GM12878 (cell line): ENCODE measurements at regions of chr6 and their contacts with region 1.

Region 1: GRCh38 chr6:29649701-29650673 is 6.9 kb upstream of the MOG start:
- DNase-seq: peak; percentile 89
- ATAC-seq: peak; percentile 97
- H3K4me3 ChIP-seq: peak overlapping the region; percentile 74
- H3K27ac ChIP-seq: peak overlapping the region; percentile 75
- H3K4me1 ChIP-seq: no peaks in the 10 kb centered on the region
- H3K27me3 ChIP-seq: no peaks in the 10 kb centered on the region
- CTCF ChIP-seq: peak; percentile 90 to 98 (median 96)
- EP300 ChIP-seq: peak in 1 of 2 experiments; percentile 17; a peak in 1 of 4 replicates
- POLR2A ChIP-seq: peak; percentile 91
- RAD21 ChIP-seq: 0 out of 2 replicates have a peak, but pooled peaks have one; percentile 19

Region 2: GRCh38 chr6:29376003-29376402 is 274.0 kb before region 1 on chr6:
- CTCF ChIA-PET with region 1: interaction called, 14 read pairs
- POLR2A ChIA-PET with region 1: no interaction called
- RAD21 ChIA-PET with region 1: interaction called, 9 read pairs
- SMC1A ChIA-PET with region 1: interaction called, 4 read pairs
- in situ Hi-C with region 1: no loop called
- intact Hi-C with region 1: no loop called
- DNase-seq: no peak
- ATAC-seq: no peak
- H3K4me3 ChIP-seq: no peak overlapping the region
- H3K27ac ChIP-seq: no peak overlapping the region
- H3K4me1 ChIP-seq: no peaks in the 10 kb centered on the region
- H3K27me3 ChIP-seq: no peaks in the 10 kb centered on the region
- CTCF ChIP-seq: peak in 1 of 3 experiments; percentile 16; a peak in 1 of 6 replicates
- EP300 ChIP-seq: no peak
- POLR2A ChIP-seq: no peak
- RAD21 ChIP-seq: peak; percentile 59

Region 3: DNA sequence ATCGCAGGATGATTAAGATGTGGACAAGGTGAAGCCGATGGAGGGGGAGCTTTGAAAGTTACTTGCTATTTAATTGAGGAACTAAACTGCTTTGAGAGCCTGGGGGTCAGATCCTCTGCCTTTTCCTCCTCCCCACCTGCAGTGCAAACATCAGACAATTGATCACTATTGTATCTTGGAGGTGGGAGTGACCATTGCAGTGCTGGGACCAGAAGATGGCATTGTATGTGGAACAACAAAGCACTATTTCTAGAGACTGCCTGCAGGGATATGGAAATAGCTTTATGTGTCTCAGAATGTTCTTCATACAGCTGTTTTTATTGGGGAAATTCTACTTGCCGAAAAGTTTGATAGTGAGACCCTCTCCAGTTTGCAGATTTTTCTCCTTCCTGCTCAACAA is 11.1 kb after region 1 on chr6:
- CTCF ChIA-PET with region 1: interaction called, 113 read pairs
- POLR2A ChIA-PET with region 1: no interaction called
- RAD21 ChIA-PET with region 1: interaction called, 7 read pairs
- SMC1A ChIA-PET with region 1: interaction called, 9 read pairs
- in situ Hi-C with region 1: no loop called
- intact Hi-C with region 1: no loop called
- DNase-seq: no peak
- ATAC-seq: no peak
- H3K4me3 ChIP-seq: no peak overlapping the region
- H3K27ac ChIP-seq: no peak overlapping the region
- H3K4me1 ChIP-seq: peaks cover 11% of the 10 kb centered on the region
- H3K27me3 ChIP-seq: no peaks in the 10 kb centered on the region
- CTCF ChIP-seq: no peak
- EP300 ChIP-seq: no peak
- POLR2A ChIP-seq: no peak
- RAD21 ChIP-seq: no peak

Region 4: GRCh38 chr6:29696155-29697125 is 46.5 kb after region 1 on chr6:
- CTCF ChIA-PET with region 1: interaction called, 39 read pairs
- POLR2A ChIA-PET with region 1: interaction called, 4 read pairs
- RAD21 ChIA-PET with region 1: interaction called, 11 read pairs
- SMC1A ChIA-PET with region 1: interaction called, 8 read pairs
- in situ Hi-C with region 1: no loop called
- intact Hi-C with region 1: loop called (anchors 2 kb)
- DNase-seq: no peak
- ATAC-seq: peak; percentile 74
- H3K4me3 ChIP-seq: no peak overlapping the region
- H3K27ac ChIP-seq: no peak overlapping the region
- H3K4me1 ChIP-seq: no peaks in the 10 kb centered on the region
- H3K27me3 ChIP-seq: no peaks in the 10 kb centered on the region; a peak in 1 of 4 replicates
- CTCF ChIP-seq: peak; percentile 37 to 64 (median 61)
- EP300 ChIP-seq: no peak
- POLR2A ChIP-seq: no peak
- RAD21 ChIP-seq: peak; percentile 38; the same call in 1 of the 2 replicates

Region 5: GRCh38 chr6:29737707-29738630 is 88.0 kb after region 1 on chr6:
- CTCF ChIA-PET with region 1: interaction called, 18 read pairs
- POLR2A ChIA-PET with region 1: no interaction called
- RAD21 ChIA-PET with region 1: no interaction called
- SMC1A ChIA-PET with region 1: interaction called, 5 read pairs
- in situ Hi-C with region 1: no loop called
- intact Hi-C with region 1: no loop called
- DNase-seq: no peak
- ATAC-seq: peak; percentile 92
- H3K4me3 ChIP-seq: no peak overlapping the region
- H3K27ac ChIP-seq: no peak overlapping the region
- H3K4me1 ChIP-seq: no peaks in the 10 kb centered on the region
- H3K27me3 ChIP-seq: no peaks in the 10 kb centered on the region
- CTCF ChIP-seq: peak; percentile 84 to 88 (median 86)
- EP300 ChIP-seq: no peak
- POLR2A ChIP-seq: no peak
- RAD21 ChIP-seq: peak; percentile 87

Region 6: DNA sequence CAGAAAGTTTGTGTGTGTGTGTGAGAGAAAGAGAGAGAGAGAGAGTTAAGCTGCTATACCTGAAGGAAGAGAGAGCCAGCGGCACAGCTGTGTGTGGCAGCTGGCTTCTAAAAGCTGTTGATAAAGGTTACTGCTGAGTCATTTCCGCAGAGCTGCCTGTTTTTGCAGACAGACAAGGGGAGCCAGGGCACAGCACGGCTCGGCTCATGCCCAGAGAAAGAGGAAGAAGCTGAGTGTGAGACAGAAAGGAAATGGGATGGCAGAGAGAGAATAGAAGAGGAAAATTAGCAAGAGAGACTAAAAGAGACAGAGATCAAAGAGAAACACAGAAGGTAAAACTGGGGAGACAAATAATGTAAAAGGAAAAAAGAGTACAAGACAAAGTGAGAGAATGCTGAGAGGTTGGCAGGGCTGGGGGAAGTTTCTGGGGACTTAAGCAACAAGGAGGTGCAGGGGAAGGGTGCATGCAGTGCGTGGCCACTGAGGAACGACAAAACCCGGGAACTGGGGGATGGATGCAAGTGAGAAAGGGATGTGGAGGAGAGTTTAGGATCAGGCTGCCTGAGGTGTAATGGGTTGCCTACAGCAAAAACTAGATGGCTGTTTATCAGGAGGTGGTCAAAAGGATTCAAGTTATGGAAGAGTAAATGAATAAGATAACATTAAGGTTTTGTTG is 315.0 kb after region 1 on chr6:
- CTCF ChIA-PET with region 1: interaction called, 10 read pairs
- POLR2A ChIA-PET with region 1: no interaction called
- RAD21 ChIA-PET with region 1: interaction called, 4 read pairs
- SMC1A ChIA-PET with region 1: interaction called, 3 read pairs
- in situ Hi-C with region 1: no loop called
- intact Hi-C with region 1: no loop called
- DNase-seq: peak; percentile 89
- ATAC-seq: peak; percentile 93
- H3K4me3 ChIP-seq: peak overlapping the region; percentile 66
- H3K27ac ChIP-seq: peak overlapping the region; percentile 93
- H3K4me1 ChIP-seq: peaks cover 5% of the 10 kb centered on the region; the same call in 1 of the 2 replicates
- H3K27me3 ChIP-seq: no peaks in the 10 kb centered on the region
- CTCF ChIP-seq: no peak
- EP300 ChIP-seq: peak; percentile 69 to 78
- POLR2A ChIP-seq: peak; percentile 64
- RAD21 ChIP-seq: no peak